Posterior vena cava (tissue), 2 donors: ENCODE measurements at regions of chr7 and their contacts with region 1.

Region 1: DNA sequence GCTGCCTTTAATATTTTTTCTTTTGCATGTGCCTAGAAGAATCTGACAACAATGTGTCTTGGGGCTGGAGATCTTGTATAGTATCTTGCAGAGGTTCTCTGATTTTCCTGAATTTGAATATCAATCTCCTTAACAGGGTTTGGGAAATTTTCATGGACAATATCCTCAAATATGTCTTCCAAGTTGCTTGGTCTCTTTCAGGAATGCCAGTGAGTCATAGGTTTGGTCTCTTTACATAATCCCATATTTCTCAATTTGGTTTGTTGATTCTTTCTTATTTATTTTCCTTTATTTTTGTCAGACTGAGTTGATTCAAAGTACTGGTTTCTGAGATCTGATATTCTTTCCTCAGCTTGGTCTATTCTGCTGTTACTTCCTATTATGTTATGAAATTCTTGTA is 208.7 kb upstream of the GLI3 start:
- DNase-seq: no peak

Region 2: DNA sequence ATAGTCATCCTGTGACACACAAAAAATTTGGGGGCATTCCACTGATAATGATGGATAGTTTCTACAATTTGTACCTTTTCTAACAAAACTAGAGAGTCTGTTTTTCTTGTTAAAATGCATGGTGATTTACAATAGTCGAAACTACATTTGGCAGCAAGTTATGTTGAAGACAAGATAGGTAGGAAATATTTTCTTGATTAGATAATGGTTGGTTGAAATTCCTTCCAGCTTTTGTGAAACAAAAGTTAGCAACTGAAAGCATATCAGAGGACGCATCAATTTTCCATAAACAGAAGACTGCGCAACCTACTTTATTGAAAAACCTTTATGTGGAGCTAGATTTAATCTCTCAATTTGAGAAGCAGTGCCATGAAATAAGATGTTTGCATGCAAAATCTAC is 52.9 kb before region 1 on chr7:
- intact Hi-C with region 1: loop called in 1 of 2 experiments (anchors 2 kb)
- DNase-seq: no peak

Region 3: GRCh38 chr7:42479816-42480633 is 34.3 kb after region 1 on chr7:
- intact Hi-C with region 1: no loop called
- DNase-seq: no peak

Region 4: DNA sequence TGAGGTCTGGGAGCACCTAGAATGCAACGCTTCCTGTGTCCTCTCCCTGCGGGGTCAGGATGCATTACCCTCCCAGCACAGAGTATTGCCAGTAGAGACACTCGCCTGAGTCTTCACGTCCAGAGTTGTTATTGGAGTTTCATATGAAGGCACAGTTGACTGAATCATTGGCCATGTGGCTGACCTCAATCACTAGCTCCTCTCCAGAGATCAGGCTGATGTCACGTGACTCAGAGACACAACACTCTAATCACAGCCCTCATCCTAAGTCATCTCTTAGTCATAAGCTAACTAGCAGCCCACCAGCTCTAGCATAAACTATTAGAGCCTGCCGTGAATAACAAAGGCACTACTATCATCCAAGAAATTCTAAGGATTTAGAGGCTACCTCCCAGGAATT is 774.6 kb after region 1 on chr7:
- intact Hi-C with region 1: no loop called
- DNase-seq: no peak